ENCODE measurements at regions of chr6 and their contacts with region 1.

Region 1: GRCh38 chr6:29834564-29835436 is 7.2 kb downstream of the HLA-G start:
- DNase-seq: peak; percentile 17 to 18
- H3K4me3 ChIP-seq: no peak overlapping the region
- H3K27ac ChIP-seq: no peak overlapping the region
- H3K4me1 ChIP-seq: no peaks in the 10 kb centered on the region
- H3K27me3 ChIP-seq: no peaks in the 10 kb centered on the region
- CTCF ChIP-seq: peak; percentile 36 to 85 (median 64)
- POLR2A ChIP-seq: no peak

Region 2: DNA sequence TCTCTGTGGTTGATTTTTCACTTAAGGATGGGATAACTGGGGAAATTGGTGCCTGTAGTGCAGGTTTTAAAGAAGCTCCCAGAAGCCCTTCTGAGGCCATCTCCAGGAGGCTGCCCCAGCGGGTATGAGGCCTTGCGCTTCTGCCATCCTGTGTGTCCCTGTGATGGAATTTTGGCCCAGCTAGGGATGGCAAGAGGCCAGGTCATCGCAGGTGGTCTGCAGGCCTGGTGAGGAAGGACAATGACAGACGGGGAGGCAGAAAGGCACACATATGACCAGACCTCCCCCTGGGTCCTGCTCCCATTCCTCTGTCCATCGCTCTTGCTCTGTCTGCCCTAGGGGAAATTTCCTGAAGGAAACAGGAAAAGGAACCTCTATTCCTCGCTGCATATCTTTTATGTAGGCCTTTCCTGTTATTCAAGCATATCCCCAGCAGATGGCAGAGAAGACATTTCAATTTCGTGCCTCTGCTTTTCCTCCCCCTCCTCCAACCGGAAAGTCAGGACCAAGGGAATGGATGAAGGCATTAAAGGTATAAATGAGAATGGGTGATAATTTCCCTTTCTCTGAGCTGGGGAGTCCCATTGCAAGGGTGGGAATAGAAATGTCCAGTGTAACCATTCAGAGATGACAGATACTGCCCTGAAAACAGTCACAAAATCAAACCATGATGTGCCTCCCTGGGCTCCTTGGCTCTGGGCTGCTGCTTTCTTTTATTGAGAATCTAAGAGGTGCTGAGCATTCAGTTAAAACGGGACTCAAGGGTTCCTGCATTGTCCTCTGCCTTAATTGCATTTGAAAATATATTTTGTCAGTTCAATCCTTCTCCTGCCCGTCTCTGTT is 129.2 kb before region 1 on chr6:
- intact Hi-C with region 1: loop called (anchors 2 kb)
- DNase-seq: peak in 1 of 2 donors; percentile 22
- H3K4me3 ChIP-seq: no peak overlapping the region
- H3K27ac ChIP-seq: no peak overlapping the region
- H3K4me1 ChIP-seq: no peaks in the 10 kb centered on the region
- H3K27me3 ChIP-seq: no peaks in the 10 kb centered on the region
- CTCF ChIP-seq: peak in 4 of 6 experiments; percentile 54 to 66 (median 62)
- POLR2A ChIP-seq: no peak

Region 3: GRCh38 chr6:29723262-29723665 is 111.5 kb before region 1 on chr6 and contains the start of gene HLA-F:
- intact Hi-C with region 1: no loop called
- DNase-seq: peak; percentile 85 to 88
- H3K4me3 ChIP-seq: peak within 1 kb of the TSS; percentile 37 to 93 (median 80)
- H3K27ac ChIP-seq: peak within 1 kb of the TSS; percentile 62 to 92 (median 92)
- H3K4me1 ChIP-seq: peaks cover 0 to 4% of the 10 kb centered on the region in 2 donors
- H3K27me3 ChIP-seq: no peaks in the 10 kb centered on the region
- CTCF ChIP-seq: no peak
- POLR2A ChIP-seq: peak; percentile 30 to 60
- total RNA-seq, gene HLA-F: 33.9 to 81.3 (median 44.6) TPM

Region 4: GRCh38 chr6:29743568-29743967 is 91.2 kb before region 1 on chr6:
- intact Hi-C with region 1: loop called (anchors 5 kb)
- DNase-seq: no peak
- H3K4me3 ChIP-seq: no peak overlapping the region
- H3K27ac ChIP-seq: no peak overlapping the region
- H3K4me1 ChIP-seq: peaks cover 6 to 7% of the 10 kb centered on the region in 2 donors
- H3K27me3 ChIP-seq: no peaks in the 10 kb centered on the region
- CTCF ChIP-seq: no peak
- POLR2A ChIP-seq: no peak

Region 5: DNA sequence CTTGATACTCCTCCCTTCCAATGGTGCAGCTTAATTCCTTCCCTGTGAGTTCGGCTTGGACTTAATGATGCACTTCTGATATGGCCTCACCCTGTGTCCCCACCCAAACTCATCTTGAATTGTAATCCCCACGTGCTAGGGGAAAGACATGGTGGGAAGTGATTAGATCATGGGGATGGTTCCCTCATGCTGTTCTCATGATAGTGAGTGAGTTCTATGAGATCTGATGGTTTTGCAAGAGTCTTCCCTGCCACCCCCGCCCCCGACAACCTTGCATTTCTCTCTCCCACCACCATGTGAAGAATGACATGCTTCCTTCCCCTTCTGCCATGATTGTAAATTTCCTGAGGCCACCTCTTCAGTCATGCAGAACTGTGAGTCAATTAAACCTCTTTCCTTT is 57.5 kb before region 1 on chr6:
- intact Hi-C with region 1: no loop called
- DNase-seq: no peak
- H3K4me3 ChIP-seq: no peak overlapping the region
- H3K27ac ChIP-seq: no peak overlapping the region
- H3K4me1 ChIP-seq: no peaks in the 10 kb centered on the region
- H3K27me3 ChIP-seq: no peaks in the 10 kb centered on the region
- CTCF ChIP-seq: no peak
- POLR2A ChIP-seq: no peak

Measured in thyroid gland (tissue), 4 donors.